Right cardiac atrium (tissue), 5 donors: ENCODE measurements at regions of chr18 and their contacts with region 1.

Region 1: DNA sequence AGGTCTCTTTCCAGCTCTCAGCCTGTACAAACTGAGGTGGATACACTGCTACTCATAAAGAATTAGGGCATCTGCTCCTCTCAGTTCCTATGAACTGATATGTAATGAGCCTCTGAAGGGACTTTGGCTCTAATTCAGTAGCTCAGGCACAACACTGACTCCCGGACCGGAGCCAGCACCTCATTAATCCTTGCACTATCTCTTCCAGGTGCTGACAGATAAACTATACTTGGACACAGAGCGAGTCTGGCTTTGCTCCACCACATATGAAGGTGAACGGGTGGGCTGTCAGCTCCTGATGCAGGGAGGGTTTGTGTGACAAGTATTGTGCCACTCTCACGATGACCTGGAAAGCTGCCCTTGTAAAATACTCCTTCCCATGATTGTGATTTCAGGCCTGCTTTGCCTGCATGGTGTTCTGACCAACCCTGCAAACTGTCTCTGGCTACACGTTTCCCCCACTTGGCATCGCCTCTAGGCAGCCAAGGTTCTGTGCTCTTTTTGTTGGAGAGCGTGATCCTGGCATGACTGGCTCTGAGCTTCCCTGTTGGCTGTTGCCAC is 111.6 kb upstream of the LMAN1 start:
- DNase-seq: peak; percentile 33 to 82 (median 75)
- ATAC-seq: peak; percentile 84 to 88
- H3K4me3 ChIP-seq: no peak overlapping the region
- H3K27ac ChIP-seq: peak overlapping the region; percentile 75
- H3K4me1 ChIP-seq: no peaks in the 10 kb centered on the region
- H3K27me3 ChIP-seq: no peaks in the 10 kb centered on the region

Region 2: GRCh38 chr18:59379772-59380522 is 90.7 kb before region 1 on chr18:
- intact Hi-C with region 1: no loop called
- DNase-seq: no peak
- ATAC-seq: no peak
- H3K4me3 ChIP-seq: no peak overlapping the region
- H3K27ac ChIP-seq: no peak overlapping the region
- H3K4me1 ChIP-seq: no peaks in the 10 kb centered on the region
- H3K27me3 ChIP-seq: no peaks in the 10 kb centered on the region

Region 3: GRCh38 chr18:59514203-59514602 is 43.6 kb after region 1 on chr18:
- intact Hi-C with region 1: loop called in 1 of 4 experiments (anchors 5 kb)
- DNase-seq: peak; percentile 82 to 92 (median 91)
- ATAC-seq: peak; percentile 88 to 90
- H3K4me3 ChIP-seq: no peak overlapping the region
- H3K27ac ChIP-seq: peak overlapping the region; percentile 16
- H3K4me1 ChIP-seq: peaks cover 4% of the 10 kb centered on the region
- H3K27me3 ChIP-seq: no peaks in the 10 kb centered on the region

Region 4: GRCh38 chr18:59697236-59697932 is 226.7 kb after region 1 on chr18 and contains the start of gene CCBE1:
- intact Hi-C with region 1: loop called in 2 of 4 experiments (anchors 5 to 10 kb)
- DNase-seq: peak; percentile 53 to 88 (median 88)
- ATAC-seq: peak; percentile 78 to 81
- H3K4me3 ChIP-seq: peak within 1 kb of the TSS; percentile 8
- H3K27ac ChIP-seq: no peak within 1 kb of the TSS
- H3K4me1 ChIP-seq: no peaks in the 10 kb centered on the region
- H3K27me3 ChIP-seq: no peaks in the 10 kb centered on the region
- total RNA-seq, gene CCBE1: 0.78 to 3.5 (median 1.9) TPM